Sigmoid colon (tissue), 7 donors: ENCODE measurements at regions of chr13 and their contacts with region 1.

Region 1: DNA sequence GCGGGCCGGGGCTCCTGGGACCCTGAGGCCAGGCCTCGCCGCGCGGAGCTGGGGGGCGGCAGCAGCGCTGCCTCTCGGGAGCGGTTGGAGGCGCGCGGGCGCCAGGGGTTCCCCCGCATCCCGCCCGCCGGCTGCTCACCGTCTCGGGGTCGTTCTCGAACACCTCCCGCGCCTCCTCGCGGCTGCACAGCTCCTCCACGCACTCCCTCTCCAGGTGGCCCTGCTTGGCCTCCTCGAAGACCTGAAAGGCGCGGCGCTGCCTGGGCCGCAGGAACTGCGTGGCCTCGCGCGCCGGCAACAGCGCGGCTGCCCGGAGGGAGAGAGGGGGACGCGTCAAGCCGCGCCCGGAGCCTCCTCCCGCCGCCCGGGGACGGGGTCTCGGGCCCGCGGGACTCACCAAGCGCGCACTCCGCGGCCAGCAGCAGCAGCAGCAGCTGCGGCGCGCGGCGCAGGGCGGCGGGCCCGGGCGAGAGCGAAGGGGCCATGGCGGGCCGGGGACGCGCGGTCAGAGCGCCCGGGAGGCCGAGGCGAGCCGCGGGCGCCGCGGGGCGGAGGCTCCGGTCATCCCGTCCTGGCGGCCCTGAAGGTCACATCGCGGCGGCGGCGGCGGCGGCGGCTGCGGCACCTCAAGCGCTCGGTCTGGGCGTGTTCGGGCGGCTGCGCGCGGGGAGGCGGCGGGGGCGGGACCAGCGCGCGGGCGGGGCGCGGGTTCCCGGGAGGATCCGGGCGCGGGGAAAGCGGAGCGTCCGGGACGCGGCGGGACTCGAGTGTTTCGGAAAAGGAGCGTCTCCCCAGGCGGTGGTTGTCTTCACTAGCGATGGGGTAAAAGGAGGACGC is at the start of gene GAS6:
- DNase-seq: no peak
- H3K4me3 ChIP-seq: peak within 1 kb of the TSS; percentile 42 to 81 (median 74)
- H3K27ac ChIP-seq: peak within 1 kb of the TSS; percentile 75 to 93 (median 82)
- H3K4me1 ChIP-seq: peaks cover 0 to 39% (median 21%) of the 10 kb centered on the region in 4 donors
- H3K27me3 ChIP-seq: no peaks in the 10 kb centered on the region
- CTCF ChIP-seq: no peak
- EP300 ChIP-seq: no peak
- POLR2A ChIP-seq: no peak
- total RNA-seq, gene GAS6: 34.4 to 105 (median 70.4) TPM

Region 2: GRCh38 chr13:113837554-113838355 is 25.9 kb before region 1 on chr13:
- intact Hi-C with region 1: loop called (anchors 2 kb)
- DNase-seq: peak; percentile 98
- H3K4me3 ChIP-seq: peak overlapping the region in 3 of 4 donors; percentile 22 to 45 (median 24)
- H3K27ac ChIP-seq: peak overlapping the region; percentile 85 to 94 (median 90)
- H3K4me1 ChIP-seq: peaks cover 0 to 49% (median 44%) of the 10 kb centered on the region in 4 donors
- H3K27me3 ChIP-seq: no peaks in the 10 kb centered on the region
- CTCF ChIP-seq: no peak
- EP300 ChIP-seq: peak in 1 of 4 donors; percentile 27
- POLR2A ChIP-seq: no peak